ENCODE measurements at regions of chr1 and their contacts with region 1.

Region 1: DNA sequence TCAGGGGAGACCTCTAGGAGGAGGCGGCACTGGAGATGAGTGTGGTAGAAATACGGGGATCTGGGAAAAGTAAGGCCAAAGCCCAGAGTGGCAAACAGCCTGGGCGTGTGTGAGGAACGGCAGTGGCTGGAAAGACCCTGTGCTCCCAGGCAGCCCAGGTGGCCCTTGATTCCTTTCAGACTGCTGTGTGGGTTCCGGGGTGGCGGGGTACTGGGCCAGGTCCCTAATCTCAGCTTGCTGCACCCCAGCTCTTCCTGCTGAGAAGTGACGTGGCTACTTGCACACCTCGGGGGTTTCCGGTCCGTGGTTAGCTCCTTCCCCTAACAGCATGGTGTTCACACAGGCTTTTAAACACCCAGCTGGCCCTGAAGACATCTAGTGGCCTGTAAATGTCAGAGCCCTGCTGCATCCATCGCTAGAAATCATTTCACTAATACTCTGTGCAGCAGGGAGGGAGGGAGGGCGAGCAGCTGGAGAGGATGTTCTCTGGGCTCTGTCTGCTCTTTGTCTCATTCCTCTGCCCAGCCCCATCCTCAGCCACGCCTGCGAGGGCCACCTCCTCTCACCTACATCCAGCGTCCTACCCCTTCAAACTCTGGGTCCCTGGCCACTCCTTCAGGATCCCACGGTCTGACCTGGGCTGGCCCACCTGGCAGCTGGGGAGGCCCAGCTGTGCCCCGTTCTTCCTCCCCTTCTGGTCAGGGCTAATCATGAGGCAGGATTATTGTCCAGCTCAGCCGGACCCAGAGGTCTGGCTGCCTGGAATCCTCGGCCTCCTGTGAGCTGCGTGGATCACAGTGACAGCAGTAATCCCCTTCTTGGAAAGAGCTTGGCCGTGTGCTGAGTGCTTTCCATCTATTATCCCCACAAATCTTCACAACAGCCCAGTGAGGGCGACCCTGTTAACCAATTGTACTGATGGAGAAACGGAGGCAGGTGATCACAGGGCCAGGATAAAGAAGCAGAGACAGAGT is 7.2 kb downstream of the ZDHHC18 start:
- DNase-seq: peak; percentile 61
- ATAC-seq: peak; percentile 96
- H3K4me3 Mint-ChIP-seq: peak overlapping the region; percentile 53
- H3K27ac Mint-ChIP-seq: peak overlapping the region; percentile 93
- H3K4me1 Mint-ChIP-seq: peaks cover 59% of the 10 kb centered on the region
- H3K27me3 Mint-ChIP-seq: no peaks in the 10 kb centered on the region
- CTCF ChIP-seq: no peak

Region 2: GRCh38 chr1:26811057-26811456 is 22.7 kb before region 1 on chr1:
- CTCF ChIA-PET with region 1: interaction called, 48 read pairs
- POLR2A ChIA-PET with region 1: interaction called, 9 read pairs
- intact Hi-C with region 1: loop called (anchors 1 kb)
- DNase-seq: no peak
- ATAC-seq: no peak
- H3K4me3 Mint-ChIP-seq: no peak overlapping the region
- H3K27ac Mint-ChIP-seq: no peak overlapping the region
- H3K4me1 Mint-ChIP-seq: peaks cover 4% of the 10 kb centered on the region
- H3K27me3 Mint-ChIP-seq: peaks cover 1% of the 10 kb centered on the region
- CTCF ChIP-seq: no peak

Region 3: DNA sequence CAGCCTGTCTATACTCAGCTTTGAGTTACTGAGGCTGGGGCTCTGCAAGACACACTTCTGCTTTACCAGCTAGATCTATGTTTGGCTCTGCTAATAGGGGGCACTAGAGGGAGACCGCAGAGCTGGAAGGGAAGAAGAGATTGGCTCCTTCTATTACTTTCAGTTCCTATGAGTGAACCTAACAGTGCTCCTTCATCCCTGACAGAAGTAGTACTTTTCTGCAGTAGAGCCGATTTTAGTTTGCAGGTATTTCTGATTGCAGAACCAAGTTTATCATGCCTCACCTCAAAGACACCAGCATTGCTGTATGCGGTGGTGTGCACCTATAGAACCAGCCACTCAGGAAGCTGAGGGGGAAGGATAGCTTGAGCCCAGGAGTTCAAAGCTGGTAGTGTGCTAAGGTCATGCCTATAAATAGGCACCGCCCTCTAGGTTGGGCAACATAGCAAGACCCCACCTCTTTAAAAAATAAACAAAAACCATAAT is 12.9 kb before region 1 on chr1:
- CTCF ChIA-PET with region 1: interaction called, 47 read pairs
- POLR2A ChIA-PET with region 1: interaction called, 40 read pairs
- intact Hi-C with region 1: loop called (anchors 1 kb)
- DNase-seq: no peak
- ATAC-seq: peak; percentile 100
- H3K4me3 Mint-ChIP-seq: peak overlapping the region; percentile 55
- H3K27ac Mint-ChIP-seq: peak overlapping the region; percentile 81
- H3K4me1 Mint-ChIP-seq: peaks cover 28% of the 10 kb centered on the region
- H3K27me3 Mint-ChIP-seq: peaks cover 3% of the 10 kb centered on the region
- CTCF ChIP-seq: no peak

Region 4: DNA sequence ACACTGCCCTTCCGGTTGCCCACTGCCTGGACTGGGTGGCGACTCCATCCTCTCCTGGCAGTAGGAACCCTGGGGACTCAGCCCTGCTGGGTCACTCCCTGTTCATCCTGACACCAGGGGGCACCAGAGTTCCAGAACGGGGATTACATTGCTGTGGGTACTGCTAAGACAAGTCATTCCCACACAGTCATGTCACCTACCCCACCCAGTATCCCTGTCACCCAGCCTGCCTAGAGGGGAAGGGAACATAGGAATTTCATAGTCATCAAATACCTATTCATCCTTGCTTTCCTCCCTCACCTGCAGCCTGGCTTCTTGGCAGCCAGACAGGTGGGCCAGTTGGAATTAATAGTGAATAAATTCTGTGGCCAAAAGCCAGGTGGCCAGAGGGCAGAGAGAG is 19.4 kb after region 1 on chr1:
- CTCF ChIA-PET with region 1: no interaction called
- POLR2A ChIA-PET with region 1: no interaction called
- intact Hi-C with region 1: loop called (anchors 2 kb)
- DNase-seq: peak; percentile 67
- ATAC-seq: peak; percentile 94
- H3K4me3 Mint-ChIP-seq: no peak overlapping the region
- H3K27ac Mint-ChIP-seq: no peak overlapping the region
- H3K4me1 Mint-ChIP-seq: no peaks in the 10 kb centered on the region
- H3K27me3 Mint-ChIP-seq: no peaks in the 10 kb centered on the region
- CTCF ChIP-seq: no peak

Region 5: DNA sequence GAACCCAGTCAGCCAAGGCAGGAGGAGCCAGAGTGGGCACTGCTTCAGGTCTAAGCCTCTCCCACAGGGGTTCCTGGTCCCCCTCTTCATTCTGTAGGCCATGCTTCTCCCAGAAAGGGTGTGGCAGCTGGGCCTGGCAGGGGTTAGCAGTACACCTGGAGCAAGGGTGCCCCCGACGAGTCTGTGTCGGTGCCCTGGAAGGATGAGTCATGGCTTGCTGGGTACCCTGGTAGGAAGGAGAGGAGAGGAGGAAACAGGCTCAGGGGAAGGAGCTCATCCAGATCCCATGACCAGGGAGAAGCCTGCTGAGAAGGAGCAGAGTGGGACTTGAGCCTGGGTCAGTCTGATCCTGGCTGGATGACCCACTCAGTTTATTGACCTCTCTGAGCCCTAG is 116.2 kb after region 1 on chr1:
- CTCF ChIA-PET with region 1: no interaction called
- POLR2A ChIA-PET with region 1: no interaction called
- intact Hi-C with region 1: no loop called
- DNase-seq: no peak
- ATAC-seq: no peak
- H3K4me3 Mint-ChIP-seq: no peak overlapping the region
- H3K27ac Mint-ChIP-seq: no peak overlapping the region
- H3K4me1 Mint-ChIP-seq: no peaks in the 10 kb centered on the region
- H3K27me3 Mint-ChIP-seq: peaks cover 2% of the 10 kb centered on the region
- CTCF ChIP-seq: no peak

Measured in activated B cell treated with CpG ODN at 0.5 μM for 24 hours (primary cell).